ENCODE measurements at regions of chrX and their contacts with region 1.

Region 1: DNA sequence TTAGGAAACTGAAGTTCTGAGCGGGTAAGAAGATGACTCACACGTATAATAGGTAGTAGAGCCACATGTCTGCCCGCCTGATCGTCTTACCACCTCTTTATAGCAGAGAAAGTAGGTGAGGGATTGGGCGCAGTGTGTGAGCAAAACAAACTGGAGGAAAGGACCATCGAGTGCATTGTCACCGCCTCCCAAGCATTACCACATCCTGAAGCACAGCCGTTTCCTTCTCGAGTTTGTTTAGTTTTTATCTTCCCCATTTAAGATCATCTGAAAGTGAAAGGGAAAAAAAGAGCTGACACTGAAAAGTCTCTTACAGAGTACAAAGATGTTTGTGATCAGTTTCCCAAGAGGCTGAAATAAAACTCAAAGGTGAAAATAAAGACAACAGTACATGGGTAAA is 14.8 kb downstream of the PDK3 start:
- DNase-seq: peak in 1 of 2 donors; percentile 16
- ATAC-seq: peak in 7 of 8 donors; percentile 47 to 84 (median 69)
- H3K4me3 ChIP-seq: peak overlapping the region in 1 of 10 donors; percentile 36
- H3K27ac ChIP-seq: peak overlapping the region in 4 of 10 donors; percentile 22 to 86 (median 50)
- H3K4me1 ChIP-seq: peaks cover 0 to 25% (median 0%) of the 10 kb centered on the region in 9 donors
- H3K27me3 ChIP-seq: peaks cover 0 to 6% (median 0%) of the 10 kb centered on the region in 7 donors
- CTCF ChIP-seq: no peak

Region 2: DNA sequence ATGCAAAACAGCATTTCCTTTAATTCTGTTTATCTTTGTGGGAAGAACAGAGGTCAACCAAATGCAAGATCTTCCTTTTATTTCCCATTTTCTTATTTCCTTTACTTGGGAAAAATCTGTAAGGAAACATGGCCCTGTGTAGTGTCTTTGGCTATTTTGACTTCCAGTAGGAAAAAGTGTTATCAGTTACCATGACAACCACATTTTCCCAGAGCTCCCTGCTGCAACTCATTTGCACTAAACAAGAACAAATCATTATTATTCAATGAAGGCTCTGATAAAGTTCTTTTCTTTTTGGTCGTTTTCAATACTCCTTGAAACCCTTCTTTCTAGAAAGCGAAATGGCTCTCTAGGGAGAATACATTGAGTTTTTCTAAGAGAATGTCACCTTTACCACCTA is 1597.4 kb before region 1 on chrX:
- intact Hi-C with region 1: no loop called
- DNase-seq: no peak
- ATAC-seq: no peak
- H3K4me3 ChIP-seq: no peak overlapping the region
- H3K27ac ChIP-seq: no peak overlapping the region
- H3K4me1 ChIP-seq: no peaks in the 10 kb centered on the region
- H3K27me3 ChIP-seq: no peaks in the 10 kb centered on the region
- CTCF ChIP-seq: no peak

Region 3: GRCh38 chrX:23478056-23478455 is 1001.9 kb before region 1 on chrX:
- intact Hi-C with region 1: no loop called
- DNase-seq: no peak
- ATAC-seq: no peak
- H3K4me3 ChIP-seq: no peak overlapping the region
- H3K27ac ChIP-seq: no peak overlapping the region
- H3K4me1 ChIP-seq: no peaks in the 10 kb centered on the region
- H3K27me3 ChIP-seq: no peaks in the 10 kb centered on the region
- CTCF ChIP-seq: no peak

Region 4: GRCh38 chrX:24464836-24465531 is 14.9 kb before region 1 on chrX and contains the start of gene PDK3:
- intact Hi-C with region 1: loop called in 1 of 10 experiments (anchors 2 kb)
- DNase-seq: peak; percentile 90 to 91
- ATAC-seq: peak; percentile 97 to 100 (median 98)
- H3K4me3 ChIP-seq: peak within 1 kb of the TSS; percentile 55 to 86 (median 77)
- H3K27ac ChIP-seq: peak within 1 kb of the TSS in 9 of 10 donors; percentile 55 to 90 (median 68)
- H3K4me1 ChIP-seq: peaks cover 0 to 23% (median 6%) of the 10 kb centered on the region in 9 donors
- H3K27me3 ChIP-seq: peaks cover 0 to 4% (median 0%) of the 10 kb centered on the region in 7 donors
- CTCF ChIP-seq: no peak
- total RNA-seq, gene PDK3: 3.8 to 18.4 (median 10.5) TPM